HEK293T (cell line): ENCODE measurements at regions of chr7 and their contacts with region 1.

Region 1: DNA sequence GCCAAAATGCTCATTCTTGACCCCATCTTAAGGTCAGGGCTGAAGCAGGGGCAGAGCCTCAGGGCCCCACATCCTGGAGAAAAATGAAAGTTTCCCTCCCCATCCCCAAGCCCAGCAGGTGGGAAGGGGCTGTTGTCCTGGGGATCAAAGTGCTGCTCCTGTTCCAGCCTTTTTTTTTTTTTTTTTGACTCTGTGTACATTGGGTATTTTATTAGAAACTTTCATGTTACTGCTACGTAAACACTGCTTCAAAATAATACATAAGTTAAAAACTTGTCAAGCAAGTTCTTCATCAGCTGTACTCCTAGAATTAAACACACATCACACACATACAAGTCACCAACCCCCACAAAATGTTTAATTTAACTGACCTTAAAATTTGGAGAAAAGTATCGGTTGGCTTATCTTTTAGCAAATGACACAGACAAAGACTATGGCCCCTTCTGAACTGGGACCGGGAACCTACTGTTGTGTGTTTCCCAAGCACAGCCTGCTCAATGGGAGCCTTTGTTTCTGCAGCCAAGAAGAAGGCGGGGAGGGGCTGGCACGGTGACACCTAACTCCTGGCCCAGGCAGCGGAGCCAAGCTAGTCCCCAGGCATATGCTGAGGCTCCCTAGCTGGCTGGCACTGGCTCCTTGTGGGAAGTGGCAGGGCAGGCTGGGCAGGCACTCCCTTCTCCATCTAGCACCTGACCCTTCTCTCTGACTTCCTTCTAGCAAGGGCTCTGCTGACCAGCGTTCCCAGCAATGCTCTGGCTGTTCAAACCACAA is 325.2 kb downstream of the PLXNA4 start:
- DNase-seq: no peak

Region 2: DNA sequence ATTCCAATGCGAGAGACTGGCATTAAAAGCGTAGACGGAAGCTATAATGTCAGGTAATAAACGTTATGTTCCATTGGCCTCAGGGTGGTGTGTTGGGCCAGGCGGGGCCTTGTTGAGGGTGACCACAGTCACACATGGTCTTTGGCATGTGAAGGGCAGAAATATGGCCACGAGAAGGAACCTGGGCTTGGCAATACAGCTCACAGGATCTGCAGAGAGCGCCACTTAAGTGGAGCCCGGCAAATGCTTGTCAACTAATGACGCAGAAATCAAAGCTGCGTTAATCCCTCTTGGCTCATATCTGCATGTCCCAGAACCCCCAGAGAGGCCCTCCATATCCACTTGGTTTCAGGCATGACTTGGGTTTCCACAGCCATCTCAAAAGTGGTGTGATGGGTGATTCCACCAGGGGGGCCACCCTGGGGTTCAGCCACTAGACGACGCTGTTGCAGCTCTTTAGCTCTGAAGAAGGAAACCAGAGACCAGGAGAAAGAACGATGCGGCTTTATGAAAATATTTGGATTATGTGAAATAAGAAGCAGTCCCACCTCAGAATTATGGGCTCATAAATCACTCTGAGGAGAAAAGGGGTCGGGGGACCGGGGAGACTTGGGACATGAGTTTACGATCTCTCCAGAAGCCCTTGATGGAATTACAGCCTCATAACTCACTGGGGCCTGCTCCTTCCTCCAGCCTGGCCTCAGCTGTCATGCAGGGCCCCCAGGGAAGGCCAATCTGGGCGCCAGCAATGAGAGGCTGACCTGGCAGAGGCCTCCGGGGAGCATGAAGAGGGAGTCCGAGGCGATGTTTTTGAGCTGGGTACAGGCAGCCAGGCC is 137.3 kb before region 1 on chr7:
- CTCF ChIA-PET with region 1: interaction called, 16 read pairs
- POLR2A ChIA-PET with region 1: no interaction called
- DNase-seq: peak; percentile 36

Region 3: GRCh38 chr7:132472463-132473120 is 221.5 kb after region 1 on chr7:
- CTCF ChIA-PET with region 1: no interaction called
- POLR2A ChIA-PET with region 1: no interaction called
- DNase-seq: peak; percentile 66